Stomach (tissue), 19 donors: ENCODE measurements at regions of chrX and their contacts with region 1.

Region 1: DNA sequence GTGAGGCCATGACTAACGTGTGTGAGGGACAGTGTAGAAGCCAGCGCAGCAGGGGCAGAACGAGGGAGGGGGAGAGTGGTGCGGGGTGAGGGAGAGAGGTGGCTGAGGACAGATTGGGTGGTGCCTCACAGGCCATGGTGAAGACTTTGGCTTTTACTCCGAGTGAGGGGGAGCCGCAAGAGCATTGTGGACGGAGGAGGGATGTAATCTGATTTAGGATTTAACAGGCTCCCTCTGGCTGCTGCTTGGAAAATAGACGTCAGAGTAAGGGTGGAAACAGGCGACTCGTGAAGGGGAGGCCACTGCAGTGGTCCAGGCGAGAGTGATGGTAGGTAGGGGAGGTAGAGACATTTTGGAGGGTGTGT is 13.0 kb downstream of the PPP1R3F start:
- DNase-seq: peak; percentile 25 to 68
- H3K4me3 ChIP-seq: no peak overlapping the region
- H3K27ac ChIP-seq: no peak overlapping the region
- H3K4me1 ChIP-seq: peaks cover 0 to 5% (median 0%) of the 10 kb centered on the region in 4 donors
- H3K27me3 ChIP-seq: peaks cover 0 to 8% (median 0%) of the 10 kb centered on the region in 3 donors
- CTCF ChIP-seq: peak in 3 of 7 experiments; percentile 16 to 38 (median 36)
- EP300 ChIP-seq: no peak
- POLR2A ChIP-seq: no peak

Region 2: DNA sequence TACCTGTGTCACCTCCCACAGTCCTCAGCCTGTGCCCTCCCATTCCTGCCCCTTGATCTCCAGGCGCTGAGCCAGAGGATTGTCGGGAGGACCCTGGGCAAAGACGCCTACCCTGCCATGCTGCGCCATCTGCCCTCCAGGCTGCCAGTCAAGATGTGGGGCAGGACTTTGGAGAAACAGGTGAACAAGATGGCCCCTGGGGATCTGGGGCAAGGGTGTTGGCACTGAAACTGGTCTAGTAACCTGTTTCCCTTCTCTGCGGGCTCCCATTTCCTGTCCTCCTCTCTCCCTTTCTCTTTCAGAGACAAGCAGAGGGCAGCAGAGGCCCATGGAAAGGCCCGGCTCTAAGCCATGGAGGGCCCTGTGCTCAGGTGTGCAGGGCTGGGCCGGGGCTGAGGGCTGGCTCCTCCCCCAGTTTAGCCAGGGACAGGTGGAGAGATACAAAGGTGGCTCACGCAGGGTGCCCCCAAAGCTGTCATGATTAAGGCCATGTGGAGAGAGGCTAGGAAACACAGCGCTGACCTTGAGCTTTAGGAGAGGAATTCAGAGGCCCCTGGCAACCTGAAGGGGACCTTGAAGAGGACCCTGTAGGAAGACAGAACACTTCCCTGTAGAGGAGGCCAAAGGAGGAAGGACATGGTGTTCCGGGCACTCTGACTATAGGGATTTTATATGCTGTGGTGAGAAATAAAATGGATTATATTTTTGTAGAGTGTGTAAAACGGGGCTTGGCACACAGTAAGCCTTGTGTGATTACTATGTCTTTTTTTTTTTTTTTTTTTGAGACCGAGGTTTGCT is 520.8 kb before region 1 on chrX and contains the start of gene GLOD5:
- intact Hi-C with region 1: no loop called
- DNase-seq: peak; percentile 74 to 90
- H3K4me3 ChIP-seq: no peak within 1 kb of the TSS
- H3K27ac ChIP-seq: peak within 1 kb of the TSS in 4 of 5 donors; percentile 48 to 58 (median 54)
- H3K4me1 ChIP-seq: no peaks in the 10 kb centered on the region
- H3K27me3 ChIP-seq: no peaks in the 10 kb centered on the region
- CTCF ChIP-seq: peak in 2 of 7 experiments; percentile 13 to 62
- EP300 ChIP-seq: no peak
- POLR2A ChIP-seq: no peak
- total RNA-seq, gene GLOD5: not detected

Region 3: DNA sequence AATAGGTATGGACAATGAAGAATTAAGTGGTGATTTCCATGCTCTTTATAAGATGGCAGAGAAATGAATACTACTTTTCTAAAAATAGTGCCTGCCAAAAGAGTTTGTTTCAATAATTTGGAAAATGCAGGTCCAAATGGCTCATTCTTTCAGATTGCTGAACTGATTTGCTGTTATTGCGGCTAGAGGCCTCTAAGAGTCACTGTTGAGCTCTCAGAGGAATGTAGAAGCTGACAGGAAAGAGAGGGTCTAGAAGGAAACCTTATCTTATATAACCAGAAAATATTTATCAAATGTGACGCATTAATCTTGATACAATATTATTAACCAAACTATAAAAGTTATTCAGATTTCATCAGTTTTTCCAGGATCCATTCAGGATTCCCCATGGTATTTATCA is 478.9 kb after region 1 on chrX:
- intact Hi-C with region 1: loop called (anchors 10 kb)
- DNase-seq: peak in 1 of 2 donors; percentile 51
- H3K4me3 ChIP-seq: no peak overlapping the region
- H3K27ac ChIP-seq: no peak overlapping the region
- H3K4me1 ChIP-seq: no peaks in the 10 kb centered on the region
- H3K27me3 ChIP-seq: peaks cover 0 to 5% (median 0%) of the 10 kb centered on the region in 3 donors
- CTCF ChIP-seq: peak in 4 of 7 experiments; percentile 19 to 41 (median 32)
- EP300 ChIP-seq: no peak
- POLR2A ChIP-seq: no peak